Activated T-helper 2 cell treated with anti-CD3 and anti-CD28 coated beads, Interferon-gamma antibody, Interleukin-2, Interleukin-4, amounts not matched to agents 10 μg/mL and 5 μg/mL and 100 μg/mL, durations not matched to agents 14 hours and 24 hours and 36 hours (primary cell): ENCODE measurements at regions of chr7 and their contacts with region 1.

Region 1: DNA sequence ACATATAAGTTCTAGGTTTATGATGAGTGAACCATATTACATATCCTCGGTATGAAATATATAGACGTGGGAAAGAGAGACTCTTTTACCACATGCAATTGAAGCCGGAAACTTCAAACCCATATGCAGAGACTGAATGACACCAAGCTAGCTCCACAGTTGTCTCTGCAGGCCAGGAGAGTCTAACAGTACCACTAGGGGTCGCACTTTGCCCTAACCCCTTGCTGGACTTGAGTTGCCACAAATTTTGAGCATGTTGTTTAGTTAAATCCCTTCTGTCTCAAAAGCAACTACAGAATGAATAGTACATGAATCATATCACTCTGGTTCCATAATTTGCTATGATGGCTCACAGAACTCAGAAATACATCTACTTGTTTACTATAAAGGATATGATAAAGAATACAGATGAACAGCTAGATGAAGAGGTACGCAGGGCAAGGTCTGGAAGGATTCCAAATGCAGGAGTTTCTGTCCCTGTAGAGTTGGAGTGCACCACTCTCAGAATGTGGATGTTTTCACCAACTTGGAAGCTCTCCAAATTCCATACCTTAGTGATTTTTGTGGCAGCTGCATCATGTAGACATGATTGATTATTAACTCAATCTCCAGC is 112.4 kb upstream of the YAE1 start:
- DNase-seq: peak; percentile 37
- H3K4me3 Mint-ChIP-seq: no peak overlapping the region
- H3K27ac Mint-ChIP-seq: no peak overlapping the region
- H3K4me1 Mint-ChIP-seq: no peaks in the 10 kb centered on the region
- H3K27me3 Mint-ChIP-seq: peaks cover 7% of the 10 kb centered on the region

Region 2: GRCh38 chr7:39280337-39280736 is 173.5 kb before region 1 on chr7:
- intact Hi-C with region 1: no loop called
- DNase-seq: no peak
- H3K4me3 Mint-ChIP-seq: no peak overlapping the region
- H3K27ac Mint-ChIP-seq: no peak overlapping the region
- H3K4me1 Mint-ChIP-seq: no peaks in the 10 kb centered on the region
- H3K27me3 Mint-ChIP-seq: no peaks in the 10 kb centered on the region

Region 3: DNA sequence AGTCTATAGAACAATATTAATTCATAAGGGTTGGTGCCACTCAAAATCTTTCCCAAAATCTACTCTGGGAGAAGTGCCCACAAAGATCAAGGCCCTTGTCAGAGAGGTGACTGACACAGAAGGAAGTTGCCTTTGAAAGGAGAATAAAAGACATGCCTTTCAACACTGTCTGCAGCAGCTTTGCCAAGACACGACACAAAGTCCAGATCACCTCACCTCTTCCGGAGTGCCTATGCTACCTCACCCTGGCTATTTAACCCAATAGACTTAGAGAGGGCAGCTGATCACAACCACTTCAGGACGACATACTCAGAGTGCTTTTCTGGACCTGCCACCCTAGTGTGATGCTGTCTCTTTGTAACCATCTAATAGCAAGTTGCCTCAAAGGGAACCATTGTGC is 63.4 kb after region 1 on chr7:
- intact Hi-C with region 1: loop called (anchors 1 kb)
- DNase-seq: no peak
- H3K4me3 Mint-ChIP-seq: no peak overlapping the region
- H3K27ac Mint-ChIP-seq: no peak overlapping the region
- H3K4me1 Mint-ChIP-seq: no peaks in the 10 kb centered on the region
- H3K27me3 Mint-ChIP-seq: peaks cover 10% of the 10 kb centered on the region

Region 4: DNA sequence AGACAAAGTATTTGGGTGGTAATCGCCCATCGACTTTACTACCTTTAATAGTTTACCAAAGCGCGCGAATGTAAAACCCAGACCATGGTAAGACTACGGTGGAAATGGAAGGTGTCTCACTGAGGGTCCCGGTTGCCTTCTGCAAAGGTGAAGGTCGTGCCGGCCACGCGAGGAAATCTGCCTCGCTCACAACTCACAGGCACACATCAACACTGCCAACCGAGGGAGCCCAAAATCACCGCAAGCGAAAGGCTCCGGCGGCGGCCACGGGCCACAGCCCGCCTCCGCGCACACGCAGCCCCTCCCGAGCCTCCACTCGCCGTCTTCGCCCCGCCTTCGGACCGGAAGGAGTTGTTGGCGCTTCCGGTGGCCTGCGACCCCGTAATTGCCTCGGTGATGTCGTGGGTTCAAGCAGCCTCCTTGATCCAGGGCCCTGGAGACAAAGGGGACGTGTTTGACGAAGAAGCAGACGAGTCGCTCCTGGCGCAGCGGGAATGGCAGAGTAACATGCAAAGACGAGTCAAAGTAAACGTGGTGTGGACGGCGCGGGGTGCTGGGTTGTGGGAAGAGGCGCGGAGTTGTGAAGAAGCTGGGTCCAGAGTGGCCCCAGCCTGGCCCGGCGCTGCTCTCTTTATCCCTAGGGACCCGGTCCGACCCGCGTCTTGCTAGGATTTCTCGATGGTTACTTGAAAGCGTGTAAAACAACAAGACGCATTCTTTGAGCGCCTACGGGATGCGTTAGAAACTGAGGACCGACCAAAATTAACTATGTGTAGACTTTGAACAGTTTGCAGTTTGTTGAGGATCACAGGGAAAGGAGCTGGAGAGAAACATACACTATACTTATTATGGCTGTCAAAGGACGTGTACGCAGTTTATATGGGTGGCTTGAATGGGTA is 112.4 kb after region 1 on chr7 and contains the start of gene YAE1:
- intact Hi-C with region 1: no loop called
- DNase-seq: peak; percentile 72
- H3K4me3 Mint-ChIP-seq: peak within 1 kb of the TSS; percentile 99
- H3K27ac Mint-ChIP-seq: peak within 1 kb of the TSS; percentile 96
- H3K4me1 Mint-ChIP-seq: peaks cover 18% of the 10 kb centered on the region
- H3K27me3 Mint-ChIP-seq: peaks cover 12% of the 10 kb centered on the region
- total RNA-seq, gene YAE1: 11.9 TPM in 2 replicates